ENCODE measurements at regions of chr9 and their contacts with region 1.

Region 1: DNA sequence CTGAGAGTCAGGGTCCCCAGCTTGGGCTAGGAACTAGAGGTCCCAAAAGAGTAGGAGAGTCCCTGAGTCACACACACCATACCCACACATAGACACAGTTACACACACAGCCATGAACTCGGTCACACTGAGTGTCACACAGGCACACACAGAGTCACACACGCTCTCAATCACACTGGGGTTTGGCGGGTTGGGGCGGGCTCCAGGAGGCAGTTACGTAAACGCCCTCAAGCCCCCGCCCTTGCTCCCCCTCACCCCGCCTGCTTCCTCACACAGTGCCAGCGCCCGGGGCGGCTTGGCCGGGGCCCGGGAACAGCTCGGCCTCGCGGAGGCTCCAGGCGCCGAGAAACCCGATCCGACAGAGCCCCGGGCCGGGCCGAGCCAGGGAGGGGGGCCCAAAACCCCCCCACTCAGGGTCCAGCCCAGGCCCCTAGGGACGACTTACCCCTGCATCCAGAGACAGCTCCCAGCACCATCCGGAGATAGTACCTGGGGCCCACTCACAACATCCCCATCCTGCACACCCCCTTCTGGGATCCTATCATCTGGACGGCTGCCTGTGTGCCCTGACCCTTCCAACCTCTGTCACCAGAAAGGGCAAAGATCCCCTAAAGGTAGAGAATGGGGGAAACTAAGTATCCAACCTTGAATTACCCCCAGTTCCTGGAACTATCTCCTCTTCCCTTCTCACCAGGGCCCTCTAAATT is 3.5 kb upstream of the CNTFR start:
- DNase-seq: no peak
- H3K4me3 ChIP-seq: no peak overlapping the region
- H3K27ac ChIP-seq: no peak overlapping the region
- H3K4me1 ChIP-seq: no peaks in the 10 kb centered on the region
- CTCF ChIP-seq: no peak

Region 2: DNA sequence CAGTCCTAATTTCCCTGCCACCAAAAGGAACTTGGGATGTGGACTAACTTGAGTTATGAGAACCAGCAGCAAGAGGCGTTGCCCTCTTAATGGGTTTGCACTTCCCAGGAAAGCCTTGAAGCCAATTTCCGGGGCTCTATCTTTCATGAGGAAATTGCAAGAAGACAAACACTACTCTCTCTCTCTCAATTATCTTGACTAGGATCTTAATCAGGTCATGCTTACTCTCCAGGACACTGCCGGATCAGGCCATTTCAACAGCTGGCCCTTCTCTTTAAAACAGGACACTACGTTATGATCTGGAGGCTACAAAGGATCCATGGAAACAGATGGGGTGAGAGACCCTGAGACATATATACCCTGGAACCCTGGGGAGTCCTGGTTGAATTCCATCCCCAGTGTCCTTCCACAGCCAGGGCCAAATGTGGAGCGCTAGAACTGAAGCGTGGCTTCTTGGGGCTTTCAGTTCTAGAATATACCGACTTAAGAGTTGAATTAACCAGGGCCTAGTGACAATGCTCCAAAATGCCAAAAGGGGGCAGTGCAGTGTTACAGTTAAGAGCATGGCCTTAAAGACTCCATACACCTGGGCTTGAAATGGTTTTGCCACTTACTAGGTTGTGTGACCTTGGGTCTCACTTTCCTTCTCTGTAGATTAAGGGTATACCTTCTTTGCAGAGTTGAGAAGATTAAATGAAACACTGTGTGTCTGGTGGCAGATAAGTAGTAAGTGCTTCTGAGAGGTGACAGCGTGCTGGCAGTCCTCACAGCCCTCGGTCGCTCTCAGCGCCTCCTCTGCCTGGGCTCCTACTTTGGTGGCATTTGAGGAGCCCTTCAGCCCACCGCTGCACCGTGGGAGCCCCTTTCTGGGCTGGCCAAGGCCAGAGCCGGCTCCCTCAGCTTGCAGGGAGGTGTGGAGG is 155.8 kb before region 1 on chr9:
- CTCF ChIA-PET with region 1: no interaction called
- POLR2A ChIA-PET with region 1: no interaction called
- intact Hi-C with region 1: loop called (anchors 2 kb)
- DNase-seq: peak; percentile 76
- H3K4me3 ChIP-seq: no peak overlapping the region
- H3K27ac ChIP-seq: no peak overlapping the region
- H3K4me1 ChIP-seq: no peaks in the 10 kb centered on the region
- CTCF ChIP-seq: peak; percentile 89

Region 3: DNA sequence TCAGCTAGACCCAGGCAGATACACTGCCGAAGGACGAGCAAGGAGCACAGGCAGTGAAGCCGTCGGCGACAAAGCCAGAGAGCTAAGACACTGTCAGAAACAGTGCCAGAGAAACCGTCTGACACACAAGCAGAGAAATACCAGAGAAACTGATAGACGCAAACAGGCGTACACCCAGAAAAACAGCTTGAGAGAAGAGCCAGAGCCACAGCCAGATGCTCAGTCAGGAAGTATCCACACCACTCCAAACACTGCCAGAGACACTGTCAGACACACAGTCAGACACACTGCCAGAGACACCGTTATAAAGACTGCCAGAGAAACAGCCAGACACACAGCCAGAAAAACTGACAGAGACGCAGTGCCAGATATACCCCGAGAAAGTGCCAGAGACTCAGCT is 22.7 kb before region 1 on chr9:
- CTCF ChIA-PET with region 1: no interaction called
- POLR2A ChIA-PET with region 1: no interaction called
- intact Hi-C with region 1: no loop called
- DNase-seq: no peak
- H3K4me3 ChIP-seq: no peak overlapping the region
- H3K27ac ChIP-seq: no peak overlapping the region
- H3K4me1 ChIP-seq: no peaks in the 10 kb centered on the region
- CTCF ChIP-seq: no peak

Region 4: GRCh38 chr9:34582787-34583186 is 10.3 kb before region 1 on chr9:
- CTCF ChIA-PET with region 1: no interaction called
- POLR2A ChIA-PET with region 1: no interaction called
- intact Hi-C with region 1: no loop called
- DNase-seq: no peak
- H3K4me3 ChIP-seq: no peak overlapping the region
- H3K27ac ChIP-seq: no peak overlapping the region
- H3K4me1 ChIP-seq: no peaks in the 10 kb centered on the region
- CTCF ChIP-seq: no peak

Measured in OCI-LY7 (cell line).